Ovary (tissue), 10 donors: ENCODE measurements at regions of chr2 and their contacts with region 1.

Region 1: GRCh38 chr2:201071479-201072200 is at the starts of genes HYCC2 and NDUFB3:
- DNase-seq: peak; percentile 88 to 93 (median 92)
- H3K4me3 ChIP-seq: peak within 1 kb of the TSS; percentile 60
- H3K27ac ChIP-seq: peak within 1 kb of the TSS; percentile 72 to 79
- H3K4me1 ChIP-seq: peaks cover 3% of the 10 kb centered on the region
- H3K27me3 ChIP-seq: no peaks in the 10 kb centered on the region
- CTCF ChIP-seq: peak in 2 of 3 donors; percentile 37 to 55
- EP300 ChIP-seq: no peak
- POLR2A ChIP-seq: peak; percentile 64
- total RNA-seq, gene HYCC2: 10.6 to 21.1 (median 18.1) TPM
- total RNA-seq, gene NDUFB3: 20.5 to 50.6 (median 47.6) TPM

Region 2: DNA sequence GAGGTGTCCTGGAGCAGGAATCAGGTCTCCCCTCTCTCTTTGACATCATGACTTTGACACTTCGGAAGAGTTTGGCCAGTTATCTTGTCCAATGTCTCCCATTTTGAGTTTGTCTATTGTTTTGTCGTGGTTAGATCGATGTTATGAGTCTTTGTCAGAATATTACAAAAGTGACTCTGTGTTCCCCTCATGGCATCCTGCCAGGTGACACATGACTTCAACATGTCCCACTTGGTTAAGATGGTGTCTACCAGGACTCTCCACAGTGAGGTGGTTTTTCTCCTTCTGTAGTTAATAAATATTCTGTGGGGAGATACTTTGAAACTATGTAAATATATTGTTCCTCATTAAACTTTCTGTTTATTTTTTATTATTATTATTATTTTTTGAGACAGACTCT is 336.6 kb before region 1 on chr2:
- intact Hi-C with region 1: no loop called
- DNase-seq: no peak
- H3K4me3 ChIP-seq: no peak overlapping the region
- H3K27ac ChIP-seq: no peak overlapping the region
- H3K4me1 ChIP-seq: no peaks in the 10 kb centered on the region
- H3K27me3 ChIP-seq: no peaks in the 10 kb centered on the region
- CTCF ChIP-seq: no peak
- EP300 ChIP-seq: no peak
- POLR2A ChIP-seq: no peak

Region 3: DNA sequence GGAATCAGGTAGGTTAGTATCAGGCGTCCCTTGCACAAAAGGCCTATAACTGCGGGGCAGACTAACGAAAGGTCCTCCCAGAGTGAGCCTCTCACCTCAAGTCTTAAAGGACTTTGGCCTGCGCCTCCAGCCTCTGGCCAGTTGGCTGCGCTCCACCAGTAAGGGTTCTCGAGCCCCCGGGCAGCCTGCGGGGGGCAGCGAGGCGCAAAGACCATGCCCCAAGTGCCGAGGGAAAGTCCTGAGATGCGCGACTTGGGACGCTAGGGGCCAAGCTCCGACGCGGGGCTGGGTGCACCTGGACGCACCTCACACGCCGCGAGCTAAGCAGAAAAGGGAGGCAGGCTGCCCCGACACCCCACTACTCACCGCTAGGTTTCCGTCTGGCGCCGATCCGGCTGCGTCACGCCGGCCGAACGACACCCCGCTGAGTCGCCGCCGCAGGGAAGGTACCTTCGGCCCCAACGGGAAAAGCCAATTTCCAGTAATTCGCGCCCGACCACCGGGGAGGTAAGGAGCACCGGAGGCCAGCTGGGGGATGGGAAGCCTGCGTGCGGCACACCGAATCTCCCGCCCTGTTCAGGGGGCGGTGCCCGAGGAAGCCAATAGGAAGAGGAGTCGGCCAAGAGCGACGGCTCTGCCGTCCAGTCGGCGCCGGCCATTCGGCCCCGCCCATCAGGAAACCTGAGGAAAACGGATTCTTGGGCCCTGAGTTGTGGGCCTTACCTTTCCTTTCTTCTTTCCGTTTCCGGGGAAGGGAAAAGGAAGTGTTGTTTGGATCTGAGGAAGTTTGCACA is 108.3 kb before region 1 on chr2 and contains the start of gene ORC2:
- intact Hi-C with region 1: loop called in 2 of 4 experiments (anchors 10 kb)
- DNase-seq: peak; percentile 95 to 98 (median 96)
- H3K4me3 ChIP-seq: peak within 1 kb of the TSS; percentile 68
- H3K27ac ChIP-seq: peak within 1 kb of the TSS; percentile 11 to 69
- H3K4me1 ChIP-seq: peaks cover 1% of the 10 kb centered on the region
- H3K27me3 ChIP-seq: no peaks in the 10 kb centered on the region
- CTCF ChIP-seq: peak; percentile 36 to 83 (median 56)
- EP300 ChIP-seq: no peak
- POLR2A ChIP-seq: no peak
- total RNA-seq, gene ORC2: 12.8 to 31.4 (median 29.0) TPM

Region 4: GRCh38 chr2:201118121-201118960 is 46.7 kb after region 1 on chr2:
- intact Hi-C with region 1: loop called in 1 of 4 experiments (anchors 5 kb)
- DNase-seq: peak; percentile 74 to 85 (median 80)
- H3K4me3 ChIP-seq: peak overlapping the region; percentile 70
- H3K27ac ChIP-seq: peak overlapping the region; percentile 24 to 98
- H3K4me1 ChIP-seq: peaks cover 7% of the 10 kb centered on the region
- H3K27me3 ChIP-seq: no peaks in the 10 kb centered on the region
- CTCF ChIP-seq: peak; percentile 25 to 63 (median 34)
- EP300 ChIP-seq: no peak
- POLR2A ChIP-seq: peak; percentile 24